A673 (cell line): ENCODE measurements at regions of chr15 and their contacts with region 1.

Region 1: GRCh38 chr15:23866832-23867231 is 179.7 kb upstream of the NDN start:
- DNase-seq: peak; percentile 12
- H3K4me3 ChIP-seq: no peak overlapping the region
- H3K27ac ChIP-seq: no peak overlapping the region
- H3K4me1 ChIP-seq: no peaks in the 10 kb centered on the region
- H3K27me3 ChIP-seq: no peaks in the 10 kb centered on the region
- CTCF ChIP-seq: peak; percentile 34; the same call in 1 of the 2 replicates

Region 2: DNA sequence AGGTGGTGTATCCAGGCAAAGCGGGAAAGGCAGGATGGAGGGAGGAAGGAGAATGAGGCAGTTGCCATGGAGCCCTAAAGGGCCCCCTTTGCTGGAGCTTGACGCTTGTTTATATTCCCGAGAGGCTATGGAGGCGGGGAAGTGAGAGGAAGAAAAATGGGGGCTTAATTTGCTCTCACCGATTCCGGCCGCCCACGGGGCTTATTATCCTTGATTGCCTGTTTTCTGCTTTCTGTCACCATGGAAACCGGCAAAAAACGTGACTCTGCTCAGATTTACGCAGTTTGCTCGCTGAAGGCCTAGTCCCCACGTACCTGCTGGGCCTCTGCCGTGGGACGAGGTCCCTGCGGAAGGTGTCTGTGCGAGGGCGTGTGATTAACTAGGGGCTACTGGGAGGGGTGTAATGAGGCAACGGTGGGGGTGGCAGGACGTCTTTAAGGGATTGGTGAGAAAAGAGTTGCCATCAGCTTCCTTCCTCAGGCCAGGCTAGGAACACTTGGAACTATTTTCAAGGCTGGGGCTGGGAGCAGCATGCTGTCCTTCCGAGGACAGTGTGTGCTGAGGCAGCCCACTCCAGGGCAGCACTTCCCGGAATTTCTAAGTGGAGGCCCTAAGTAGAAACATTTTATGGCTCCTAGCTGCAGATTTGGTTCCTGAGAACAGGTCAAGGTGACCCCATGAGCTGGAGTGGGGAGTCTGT is 68.9 kb before region 1 on chr15:
- CTCF ChIA-PET with region 1: no interaction called
- POLR2A ChIA-PET with region 1: no interaction called
- intact Hi-C with region 1: loop called (anchors 10 kb)
- DNase-seq: no peak
- H3K4me3 ChIP-seq: no peak overlapping the region
- H3K27ac ChIP-seq: no peak overlapping the region
- H3K4me1 ChIP-seq: no peaks in the 10 kb centered on the region
- H3K27me3 ChIP-seq: no peaks in the 10 kb centered on the region
- CTCF ChIP-seq: no peak